ENCODE measurements at regions of chr18 and their contacts with region 1.

Region 1: DNA sequence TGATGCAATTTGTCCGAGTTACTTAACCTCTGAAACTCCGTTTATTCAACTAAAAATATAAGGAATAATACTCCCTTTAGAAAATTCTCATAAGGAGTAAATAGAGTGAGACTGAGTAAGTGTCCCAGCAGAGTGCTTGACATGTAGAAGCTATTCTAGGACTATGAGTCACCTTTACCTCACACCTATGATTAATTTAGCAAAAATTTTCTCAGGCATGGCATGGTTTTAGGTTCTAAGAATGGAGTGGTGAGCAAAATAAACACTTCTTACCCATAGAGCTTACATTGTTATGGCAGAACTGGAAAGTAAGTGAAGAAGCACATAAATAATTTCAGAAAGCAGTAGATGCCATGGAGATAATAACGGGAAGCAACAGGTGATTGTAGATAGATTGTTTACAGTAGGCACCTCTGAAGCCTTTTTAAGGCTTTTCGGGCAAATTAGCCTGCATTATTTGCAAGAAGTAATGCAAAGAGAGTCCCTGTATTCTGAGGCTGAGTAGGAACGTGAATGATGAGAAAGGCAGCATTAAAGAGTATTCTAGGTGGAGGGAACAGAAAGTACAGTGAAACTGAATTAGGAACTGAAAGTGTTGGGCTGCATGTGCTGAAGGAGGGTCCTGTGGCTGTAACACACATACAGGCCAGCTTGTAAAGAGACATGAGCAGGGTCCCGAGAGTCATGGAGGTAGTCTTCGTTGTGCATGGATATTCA is 209.2 kb downstream of the ZNF407 start:
- DNase-seq: peak; percentile 16 to 98
- H3K4me3 ChIP-seq: peak overlapping the region; percentile 10; the same call in 1 of the 2 replicates
- H3K27ac ChIP-seq: peak overlapping the region; percentile 81
- H3K4me1 ChIP-seq: peaks cover 22% of the 10 kb centered on the region
- H3K27me3 ChIP-seq: no peaks in the 10 kb centered on the region
- CTCF ChIP-seq: no peak

Region 2: DNA sequence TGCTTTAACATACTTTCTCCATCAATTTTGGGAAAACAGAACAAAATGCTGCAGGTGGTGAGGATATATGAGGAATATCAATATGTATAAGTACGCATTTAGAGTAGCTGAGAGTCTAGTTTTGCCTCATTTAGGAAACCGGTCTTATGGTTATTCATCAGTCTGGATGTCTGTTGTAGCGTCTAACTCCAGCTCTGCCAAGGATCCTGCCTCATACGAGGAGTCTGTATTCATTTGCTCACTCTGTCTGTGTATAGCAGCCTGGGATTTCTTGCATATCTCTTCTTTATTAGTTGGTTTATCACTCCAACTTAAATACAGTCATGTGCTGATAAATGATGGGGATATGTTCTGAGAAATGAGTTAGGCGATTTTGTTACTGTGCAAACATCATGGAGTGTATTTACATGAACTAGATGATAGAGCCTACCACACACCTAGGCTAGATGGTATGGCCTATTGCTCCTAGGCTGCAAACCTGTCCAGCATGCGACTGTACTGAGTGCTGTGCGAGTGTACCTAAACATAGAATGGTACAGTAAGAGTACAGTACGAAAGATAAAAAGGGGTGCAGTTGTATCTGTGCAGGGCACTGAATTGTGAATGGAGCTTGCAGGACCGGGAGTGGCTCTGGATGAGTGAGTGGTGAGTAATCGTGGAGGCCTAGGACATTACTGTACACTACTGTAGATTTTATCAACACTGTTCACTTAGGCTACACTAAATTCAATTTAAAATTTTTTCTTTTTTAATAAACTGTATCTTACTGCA is 61.0 kb before region 1 on chr18:
- CTCF ChIA-PET with region 1: no interaction called
- POLR2A ChIA-PET with region 1: no interaction called
- intact Hi-C with region 1: loop called (anchors 2 kb)
- DNase-seq: peak; percentile 65 to 81
- H3K4me3 ChIP-seq: no peak overlapping the region
- H3K27ac ChIP-seq: no peak overlapping the region; the same call in 1 of the 2 replicates
- H3K4me1 ChIP-seq: peaks cover 17% of the 10 kb centered on the region
- H3K27me3 ChIP-seq: no peaks in the 10 kb centered on the region
- CTCF ChIP-seq: no peak

Region 3: GRCh38 chr18:74834424-74835296 is 27.8 kb after region 1 on chr18:
- CTCF ChIA-PET with region 1: no interaction called
- POLR2A ChIA-PET with region 1: interaction called, 3 read pairs
- intact Hi-C with region 1: loop called (anchors 1 kb)
- DNase-seq: peak; percentile 43 to 70
- H3K4me3 ChIP-seq: no peak overlapping the region
- H3K27ac ChIP-seq: no peak overlapping the region
- H3K4me1 ChIP-seq: peaks cover 29% of the 10 kb centered on the region
- H3K27me3 ChIP-seq: no peaks in the 10 kb centered on the region
- CTCF ChIP-seq: no peak

Measured in PC-9 (cell line).